ENCODE measurements at regions of chr6 and their contacts with region 1.

Region 1: DNA sequence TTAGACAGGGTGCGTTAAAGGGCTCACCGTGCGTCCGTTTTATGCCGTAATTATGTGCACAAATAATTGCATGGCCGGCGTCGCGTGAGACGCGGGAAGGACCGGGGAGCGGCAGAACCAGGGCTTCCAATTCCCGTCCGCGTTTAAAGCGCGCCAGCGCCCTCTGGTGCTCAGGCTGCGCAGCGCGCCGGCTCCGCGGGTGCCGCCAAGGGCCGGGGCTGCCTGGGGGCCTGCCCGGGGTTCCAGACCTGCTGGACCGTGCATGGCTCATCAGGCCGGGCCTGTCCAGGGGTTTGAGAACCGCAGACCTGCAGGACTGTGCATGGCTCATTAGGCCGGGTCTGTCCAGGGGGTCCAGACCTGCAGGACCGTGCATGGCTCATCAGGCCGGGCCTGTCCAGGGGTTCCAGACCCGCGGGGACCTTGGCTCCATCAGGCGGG is 369.0 kb downstream of the THBS2 start:
- DNase-seq: peak; percentile 76
- H3K4me3 Mint-ChIP-seq: peak overlapping the region; percentile 62
- H3K27ac Mint-ChIP-seq: no peak overlapping the region
- H3K4me1 Mint-ChIP-seq: peaks cover 8% of the 10 kb centered on the region
- H3K27me3 Mint-ChIP-seq: no peaks in the 10 kb centered on the region

Region 2: GRCh38 chr6:167907837-167908681 is 976.6 kb before region 1 on chr6:
- CTCF ChIA-PET with region 1: no interaction called
- intact Hi-C with region 1: loop called (anchors 2 kb)
- DNase-seq: peak; percentile 8
- H3K4me3 Mint-ChIP-seq: no peak overlapping the region
- H3K27ac Mint-ChIP-seq: no peak overlapping the region
- H3K4me1 Mint-ChIP-seq: no peaks in the 10 kb centered on the region
- H3K27me3 Mint-ChIP-seq: no peaks in the 10 kb centered on the region

Region 3: GRCh38 chr6:168157272-168158007 is 727.2 kb before region 1 on chr6:
- CTCF ChIA-PET with region 1: no interaction called
- intact Hi-C with region 1: loop called (anchors 10 kb)
- DNase-seq: peak; percentile 14
- H3K4me3 Mint-ChIP-seq: no peak overlapping the region
- H3K27ac Mint-ChIP-seq: peak overlapping the region; percentile 50
- H3K4me1 Mint-ChIP-seq: peaks cover 2% of the 10 kb centered on the region
- H3K27me3 Mint-ChIP-seq: peaks cover 31% of the 10 kb centered on the region

Region 4: GRCh38 chr6:168370310-168370991 is 514.2 kb before region 1 on chr6:
- CTCF ChIA-PET with region 1: interaction called, 9 read pairs
- intact Hi-C with region 1: loop called (anchors 1 kb)
- DNase-seq: peak; percentile 75
- H3K4me3 Mint-ChIP-seq: no peak overlapping the region
- H3K27ac Mint-ChIP-seq: no peak overlapping the region
- H3K4me1 Mint-ChIP-seq: peaks cover 7% of the 10 kb centered on the region
- H3K27me3 Mint-ChIP-seq: peaks cover 4% of the 10 kb centered on the region

Region 5: DNA sequence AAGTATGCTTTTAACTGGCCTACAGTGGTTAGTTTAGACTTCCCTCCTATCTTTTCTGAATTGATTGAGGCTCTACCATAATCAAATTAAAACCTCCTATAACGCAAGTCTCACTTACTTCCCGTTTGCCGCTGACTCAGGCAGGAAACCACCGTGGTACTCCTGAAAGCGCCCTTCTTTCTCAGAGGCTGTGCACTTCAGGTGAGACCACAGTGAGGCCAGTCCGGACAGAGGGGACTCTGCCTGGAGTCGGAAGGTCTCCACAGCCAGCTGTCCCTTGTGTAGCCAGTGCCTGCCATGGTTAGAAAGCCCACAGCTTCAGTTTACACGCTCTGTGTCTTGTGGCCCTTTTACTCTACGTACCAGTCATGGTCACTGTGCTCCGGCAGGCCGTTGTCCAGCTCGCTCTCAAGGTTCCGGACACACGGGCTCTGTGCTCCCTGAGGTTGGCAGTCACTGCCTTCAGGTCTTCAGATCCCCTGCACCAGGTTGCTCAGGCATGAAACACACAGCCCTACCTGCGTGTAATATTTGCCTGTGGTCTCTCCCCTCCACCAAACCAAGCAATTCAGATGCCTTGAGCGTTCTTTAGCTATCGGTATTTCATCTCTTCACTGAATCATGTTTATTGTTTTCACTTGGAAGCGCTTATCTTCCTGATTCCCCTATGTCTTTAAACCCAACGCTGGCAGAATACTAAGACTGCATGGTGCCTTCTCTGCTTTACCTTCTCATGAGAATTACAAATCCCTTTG is 264.9 kb before region 1 on chr6:
- CTCF ChIA-PET with region 1: no interaction called
- intact Hi-C with region 1: loop called (anchors 10 kb)
- DNase-seq: peak; percentile 62
- H3K4me3 Mint-ChIP-seq: no peak overlapping the region
- H3K27ac Mint-ChIP-seq: no peak overlapping the region
- H3K4me1 Mint-ChIP-seq: peaks cover 13% of the 10 kb centered on the region
- H3K27me3 Mint-ChIP-seq: peaks cover 7% of the 10 kb centered on the region